Activated CD8-positive, alpha-beta memory T cell treated with anti-CD3 and anti-CD28 coated beads, Interleukin-2, amount 10 ng/mL, durations not matched to agents 7 days and 5 days (primary cell): ENCODE measurements at regions of chr17 and their contacts with region 1.

Region 1: GRCh38 chr17:42527273-42527703 is 8.8 kb upstream of the NAGLU start:
- DNase-seq: peak; percentile 85
- ATAC-seq: peak; percentile 83
- H3K4me3 Mint-ChIP-seq: no peak overlapping the region
- H3K27ac Mint-ChIP-seq: no peak overlapping the region
- H3K4me1 Mint-ChIP-seq: peaks cover 56% of the 10 kb centered on the region
- H3K27me3 Mint-ChIP-seq: peaks cover 29% of the 10 kb centered on the region

Region 2: GRCh38 chr17:42422958-42423712 is 104.2 kb before region 1 on chr17 and contains the start of gene CAVIN1:
- CTCF ChIA-PET with region 1: interaction called, 23 read pairs
- DNase-seq: no peak
- ATAC-seq: peak; percentile 22
- H3K4me3 Mint-ChIP-seq: peak within 1 kb of the TSS; percentile 79
- H3K27ac Mint-ChIP-seq: no peak within 1 kb of the TSS
- H3K4me1 Mint-ChIP-seq: peaks cover 15% of the 10 kb centered on the region
- H3K27me3 Mint-ChIP-seq: peaks cover 63% of the 10 kb centered on the region
- total RNA-seq, gene CAVIN1: 0.66 to 1.3 TPM

Region 3: GRCh38 chr17:42441371-42442195 is 85.7 kb before region 1 on chr17:
- CTCF ChIA-PET with region 1: interaction called, 10 read pairs
- DNase-seq: no peak
- ATAC-seq: peak; percentile 57
- H3K4me3 Mint-ChIP-seq: no peak overlapping the region
- H3K27ac Mint-ChIP-seq: no peak overlapping the region
- H3K4me1 Mint-ChIP-seq: peaks cover 16% of the 10 kb centered on the region
- H3K27me3 Mint-ChIP-seq: peaks cover 34% of the 10 kb centered on the region

Region 4: DNA sequence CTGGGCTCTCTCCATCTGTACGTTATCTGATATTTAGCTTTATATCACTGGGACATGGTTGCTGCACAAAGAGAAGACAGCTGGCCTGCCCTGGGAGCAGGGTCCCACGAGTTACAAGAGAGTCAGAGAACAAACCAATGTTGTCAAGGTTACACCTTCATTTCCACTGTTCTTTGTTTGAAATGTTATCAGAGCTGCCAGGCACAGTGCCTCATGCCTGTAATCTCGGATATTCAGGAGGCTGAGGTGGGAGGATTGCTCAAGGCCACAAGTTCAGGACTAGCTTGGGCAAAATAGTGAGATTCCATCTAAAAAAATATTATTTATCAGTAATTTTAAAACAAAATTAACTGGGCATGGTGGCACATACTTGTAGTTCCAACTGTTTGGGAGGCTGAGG is 34.0 kb before region 1 on chr17:
- CTCF ChIA-PET with region 1: no interaction called
- DNase-seq: no peak
- ATAC-seq: no peak
- H3K4me3 Mint-ChIP-seq: no peak overlapping the region
- H3K27ac Mint-ChIP-seq: no peak overlapping the region
- H3K4me1 Mint-ChIP-seq: peaks cover 12% of the 10 kb centered on the region
- H3K27me3 Mint-ChIP-seq: peaks cover 9% of the 10 kb centered on the region

Region 5: GRCh38 chr17:42586514-42587230 is 59.4 kb after region 1 on chr17:
- CTCF ChIA-PET with region 1: no interaction called
- DNase-seq: no peak
- ATAC-seq: no peak
- H3K4me3 Mint-ChIP-seq: no peak overlapping the region
- H3K27ac Mint-ChIP-seq: no peak overlapping the region
- H3K4me1 Mint-ChIP-seq: peaks cover 4% of the 10 kb centered on the region
- H3K27me3 Mint-ChIP-seq: no peaks in the 10 kb centered on the region